ENCODE measurements at regions of chr5 and their contacts with region 1.

Region 1: DNA sequence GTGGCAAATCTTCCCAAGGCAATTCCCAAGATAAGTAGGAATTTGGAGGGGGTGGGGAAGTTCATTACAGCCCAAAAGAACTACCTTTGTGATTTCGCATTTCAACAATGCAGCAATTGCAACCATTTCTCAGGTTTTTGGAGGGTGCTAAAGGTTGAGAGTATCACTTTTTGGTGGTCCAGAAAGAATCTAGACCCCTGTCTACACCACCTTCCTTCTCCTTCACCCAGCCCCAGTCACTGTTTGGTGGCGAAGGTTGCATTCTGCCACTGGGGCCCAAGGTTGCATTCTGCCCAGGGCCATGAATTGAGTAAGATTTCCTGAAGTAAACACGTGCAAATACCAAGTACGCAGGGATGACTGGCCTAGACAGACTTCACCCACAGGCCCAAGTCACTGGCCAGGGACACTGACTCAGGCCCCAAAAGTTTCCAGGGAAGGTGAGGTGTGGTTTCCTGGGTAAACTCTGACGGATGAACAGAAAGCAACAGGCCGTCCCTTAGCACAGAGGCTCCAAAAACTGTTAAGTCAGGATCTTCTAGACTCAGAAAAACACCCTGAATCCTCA is 5.7 kb downstream of the PDE6A start:
- DNase-seq: peak in 2 of 4 experiments; percentile 36 to 58
- ATAC-seq: peak; percentile 9
- H3K4me3 ChIP-seq: no peak overlapping the region
- H3K27ac ChIP-seq: peak overlapping the region; percentile 88
- H3K4me1 ChIP-seq: peaks cover 24 to 59% of the 10 kb centered on the region in 2 experiments
- H3K27me3 ChIP-seq: no peaks in the 10 kb centered on the region
- CTCF ChIP-seq: no peak
- EP300 ChIP-seq: no peak
- POLR2A ChIP-seq: no peak
- RAD21 ChIP-seq: no peak

Region 2: DNA sequence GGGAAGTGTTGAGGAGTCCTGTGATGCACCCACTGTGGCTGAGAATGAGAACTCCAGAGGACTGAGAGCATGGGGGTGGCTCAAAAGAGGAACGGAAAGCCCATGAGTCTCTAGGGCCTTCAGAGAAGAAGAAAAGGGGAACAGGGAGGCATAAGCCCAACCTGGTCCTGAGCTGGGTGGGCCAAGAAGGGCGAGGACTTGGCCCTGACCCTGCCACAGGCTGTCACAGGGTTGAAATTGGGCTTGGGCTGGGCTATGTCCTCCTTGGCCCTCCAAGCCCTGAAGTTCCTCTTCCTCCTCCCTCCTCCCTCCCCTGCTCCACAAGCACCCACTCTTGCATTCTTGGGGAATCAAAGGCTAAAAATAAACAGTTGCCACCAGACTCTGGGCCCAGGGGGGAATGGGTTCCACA is 258.1 kb before region 1 on chr5:
- CTCF ChIA-PET with region 1: no interaction called
- POLR2A ChIA-PET with region 1: no interaction called
- in situ Hi-C with region 1: no loop called
- intact Hi-C with region 1: no loop called
- DNase-seq: no peak
- ATAC-seq: peak; percentile 50
- H3K4me3 ChIP-seq: no peak overlapping the region
- H3K27ac ChIP-seq: no peak overlapping the region; the same call in 2 of the 3 replicates
- H3K4me1 ChIP-seq: peaks cover 2 to 27% of the 10 kb centered on the region in 2 experiments; a peak in 3 of 5 replicates
- H3K27me3 ChIP-seq: no peaks in the 10 kb centered on the region; a peak in 1 of 5 replicates
- CTCF ChIP-seq: no peak
- EP300 ChIP-seq: no peak
- POLR2A ChIP-seq: no peak
- RAD21 ChIP-seq: no peak

Region 3: GRCh38 chr5:149951135-149951749 is 12.4 kb after region 1 on chr5:
- CTCF ChIA-PET with region 1: no interaction called
- POLR2A ChIA-PET with region 1: interaction called, 12 read pairs
- in situ Hi-C with region 1: no loop called
- intact Hi-C with region 1: no loop called
- DNase-seq: peak; percentile 44 to 62 (median 53)
- ATAC-seq: peak; percentile 94
- H3K4me3 ChIP-seq: no peak overlapping the region
- H3K27ac ChIP-seq: 0 out of 3 replicates have a peak overlapping the region, but pooled peaks have one; percentile 8
- H3K4me1 ChIP-seq: peaks cover 0 to 8% of the 10 kb centered on the region in 2 experiments; a peak in 2 of 5 replicates
- H3K27me3 ChIP-seq: no peaks in the 10 kb centered on the region
- CTCF ChIP-seq: peak; percentile 56 to 61 (median 58); a peak in 5 of 6 replicates
- EP300 ChIP-seq: no peak
- POLR2A ChIP-seq: no peak
- RAD21 ChIP-seq: peak; percentile 19 to 55; a peak in 3 of 4 replicates